MCF 10A (cell line): ENCODE measurements at regions of chr22 and their contacts with region 1.

Region 1: DNA sequence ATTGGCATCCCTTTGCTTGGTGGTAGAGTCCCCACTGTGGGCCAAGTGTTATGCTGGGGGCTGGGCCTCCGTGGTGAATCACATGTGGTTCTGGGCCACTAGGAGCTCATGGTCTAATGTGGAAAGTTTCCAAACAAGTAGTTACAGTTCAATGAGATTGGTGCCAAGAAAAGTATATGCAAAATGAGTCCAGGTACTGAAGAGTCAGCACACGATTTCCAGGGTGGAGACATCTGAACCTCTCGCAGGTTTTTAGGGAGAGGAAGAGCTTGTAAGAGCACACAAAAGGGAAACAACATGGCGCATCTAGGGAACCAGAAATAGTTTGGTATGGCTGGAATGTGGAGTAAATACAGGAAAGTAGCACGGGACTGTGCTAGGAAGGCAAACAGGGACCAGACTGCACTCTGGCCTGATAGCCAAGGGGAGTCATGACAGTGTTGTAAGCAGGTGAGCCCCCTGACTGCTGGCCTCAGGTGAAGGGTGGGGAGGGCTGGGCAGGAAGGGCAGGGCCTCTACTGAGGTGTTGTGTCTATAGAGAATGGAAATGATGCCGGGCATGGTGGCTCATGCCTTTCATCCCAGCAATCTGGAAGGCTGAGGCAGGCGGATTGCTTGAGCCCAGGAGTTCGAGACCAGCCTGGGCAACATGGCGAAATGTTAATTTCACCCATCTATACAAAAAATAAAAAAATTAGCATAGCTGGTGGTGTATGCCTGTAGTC is 12.6 kb downstream of the POLR2F start:
- DNase-seq: peak; percentile 37
- H3K4me3 Mint-ChIP-seq: no peak overlapping the region
- H3K27ac Mint-ChIP-seq: peak overlapping the region; percentile 31
- H3K4me1 Mint-ChIP-seq: peaks cover 6% of the 10 kb centered on the region
- H3K27me3 Mint-ChIP-seq: no peaks in the 10 kb centered on the region
- CTCF ChIP-seq: no peak

Region 2: GRCh38 chr22:37817705-37818408 is 148.2 kb before region 1 on chr22:
- CTCF ChIA-PET with region 1: interaction called, 13 read pairs
- POLR2A ChIA-PET with region 1: interaction called, 3 read pairs
- intact Hi-C with region 1: loop called (anchors 1 kb)
- DNase-seq: peak; percentile 71
- H3K4me3 Mint-ChIP-seq: no peak overlapping the region
- H3K27ac Mint-ChIP-seq: no peak overlapping the region
- H3K4me1 Mint-ChIP-seq: peaks cover 6% of the 10 kb centered on the region
- H3K27me3 Mint-ChIP-seq: no peaks in the 10 kb centered on the region
- CTCF ChIP-seq: peak; percentile 92

Region 3: GRCh38 chr22:37887610-37888378 is 78.3 kb before region 1 on chr22:
- CTCF ChIA-PET with region 1: interaction called, 20 read pairs
- POLR2A ChIA-PET with region 1: interaction called, 5 read pairs
- intact Hi-C with region 1: loop called (anchors 1 kb)
- DNase-seq: peak; percentile 94
- H3K4me3 Mint-ChIP-seq: no peak overlapping the region
- H3K27ac Mint-ChIP-seq: peak overlapping the region; percentile 84
- H3K4me1 Mint-ChIP-seq: peaks cover 16% of the 10 kb centered on the region
- H3K27me3 Mint-ChIP-seq: no peaks in the 10 kb centered on the region
- CTCF ChIP-seq: peak; percentile 56

Region 4: GRCh38 chr22:37953437-37954179 is 12.5 kb before region 1 on chr22 and contains the starts of genes C22orf23 and POLR2F:
- CTCF ChIA-PET with region 1: interaction called, 7 read pairs
- POLR2A ChIA-PET with region 1: interaction called, 16 read pairs
- intact Hi-C with region 1: no loop called
- DNase-seq: peak; percentile 96
- H3K4me3 Mint-ChIP-seq: peak within 1 kb of the TSS; percentile 76
- H3K27ac Mint-ChIP-seq: peak within 1 kb of the TSS; percentile 84
- H3K4me1 Mint-ChIP-seq: peaks cover 18% of the 10 kb centered on the region
- H3K27me3 Mint-ChIP-seq: no peaks in the 10 kb centered on the region
- CTCF ChIP-seq: no peak
- total RNA-seq, gene C22orf23: not detected in 2 replicates
- total RNA-seq, gene POLR2F: 87.5 and 97.6 TPM in 2 replicates

Region 5: DNA sequence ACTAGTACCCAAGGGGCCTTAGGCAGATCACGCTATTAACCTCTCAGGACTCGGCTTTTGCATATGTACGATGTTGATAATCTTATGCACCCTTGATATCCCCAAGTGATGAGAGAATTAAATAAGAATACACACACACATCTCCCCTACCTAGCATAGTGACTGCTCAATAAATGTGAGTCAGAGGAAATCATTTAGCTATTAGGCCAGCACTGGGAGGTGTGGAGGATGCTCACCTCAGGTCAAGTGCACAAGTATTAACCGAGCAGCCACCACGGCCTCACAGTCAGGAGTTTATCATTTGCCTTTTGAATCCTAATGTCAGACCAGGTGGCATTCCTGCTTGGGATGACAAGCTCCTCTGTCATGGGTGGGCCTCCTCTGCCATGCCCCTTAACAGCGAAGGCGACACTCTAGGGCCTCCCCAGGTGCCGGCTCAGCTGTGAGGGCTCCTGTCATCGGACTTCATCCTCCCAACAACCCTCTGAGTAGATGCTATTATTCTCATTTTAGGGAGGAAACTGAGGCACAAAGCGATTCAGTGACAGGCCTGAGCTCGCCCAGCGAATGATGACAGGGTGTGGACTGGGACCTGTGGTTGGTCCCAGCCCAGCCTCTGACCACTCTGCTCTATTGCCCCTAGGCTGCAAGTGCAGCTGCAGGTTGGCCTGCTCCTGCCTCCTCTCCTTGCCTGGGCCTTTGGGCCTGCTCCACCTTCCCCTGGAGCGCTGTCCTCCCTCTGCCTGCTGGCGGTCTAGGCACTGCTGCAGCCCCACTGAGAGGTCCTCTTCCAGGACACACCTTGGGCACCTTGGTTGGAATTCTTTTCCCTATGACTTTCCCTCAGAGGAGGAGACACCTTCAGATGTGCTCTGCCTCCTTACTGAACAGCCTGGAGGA is 23.3 kb after region 1 on chr22:
- CTCF ChIA-PET with region 1: interaction called, 10 read pairs
- POLR2A ChIA-PET with region 1: interaction called, 3 read pairs
- intact Hi-C with region 1: no loop called
- DNase-seq: no peak
- H3K4me3 Mint-ChIP-seq: no peak overlapping the region
- H3K27ac Mint-ChIP-seq: no peak overlapping the region
- H3K4me1 Mint-ChIP-seq: no peaks in the 10 kb centered on the region
- H3K27me3 Mint-ChIP-seq: no peaks in the 10 kb centered on the region
- CTCF ChIP-seq: no peak

Region 6: DNA sequence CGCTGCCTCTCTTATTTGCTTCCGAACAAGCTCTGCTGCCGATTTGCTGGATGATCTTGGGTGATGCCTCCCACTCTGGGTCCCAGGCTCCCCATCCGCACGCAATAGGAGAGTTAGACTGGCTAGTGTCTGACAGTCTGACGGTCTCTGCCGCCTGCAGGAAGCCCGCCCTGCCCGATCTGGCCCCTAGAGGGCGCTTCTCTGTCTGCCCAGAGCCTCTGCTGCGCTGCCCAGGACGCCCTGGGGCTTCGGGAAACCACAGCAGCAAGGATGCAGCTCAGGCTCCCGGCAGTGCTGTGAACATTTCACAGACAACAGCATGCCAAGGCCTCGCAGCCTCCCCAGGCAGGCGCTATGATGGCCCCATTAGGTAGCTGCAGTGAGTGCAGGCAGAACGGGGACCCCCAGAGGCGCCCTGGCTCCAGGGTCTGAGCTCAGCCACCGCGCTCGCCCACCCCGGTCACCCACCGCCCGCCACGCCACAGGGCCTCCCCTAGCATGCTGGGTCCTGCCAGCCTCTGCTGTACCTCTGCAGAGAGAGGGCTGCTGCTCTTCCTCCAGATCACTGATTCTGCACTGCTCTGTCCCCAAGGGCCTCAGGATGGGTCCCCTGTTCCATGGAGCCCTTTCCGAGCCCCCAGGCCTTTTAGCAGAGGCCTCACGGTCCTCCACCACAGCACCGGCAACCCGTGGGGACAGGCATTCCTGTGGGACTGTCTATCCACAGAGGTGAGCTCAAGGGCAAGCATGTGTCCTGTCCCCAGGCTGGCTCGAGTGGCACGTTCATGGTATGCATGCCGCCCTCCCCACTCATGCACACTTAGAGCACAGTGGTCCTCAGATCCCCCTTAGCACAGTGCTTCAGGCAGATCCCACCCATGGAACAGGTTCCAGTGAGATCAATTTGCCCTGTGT is 148.6 kb after region 1 on chr22:
- CTCF ChIA-PET with region 1: no interaction called
- POLR2A ChIA-PET with region 1: no interaction called
- intact Hi-C with region 1: no loop called
- DNase-seq: peak; percentile 76
- H3K4me3 Mint-ChIP-seq: no peak overlapping the region
- H3K27ac Mint-ChIP-seq: no peak overlapping the region
- H3K4me1 Mint-ChIP-seq: peaks cover 5% of the 10 kb centered on the region
- H3K27me3 Mint-ChIP-seq: no peaks in the 10 kb centered on the region
- CTCF ChIP-seq: peak; percentile 81